Activated T-helper 1 cell treated with anti-CD3 and anti-CD28 coated beads, Interleukin-12 subunit alpha, Interleukin-12 subunit beta, Interleukin-2, Interleukin-4 antibody, amounts not matched to agents 30 ng/mL and 10 ng/mL and 1 ng/mL, durations not matched to agents 14 hours and 24 hours and 36 hours (primary cell): ENCODE measurements at regions of chr12 and their contacts with region 1.

Region 1: GRCh38 chr12:118016424-118017264 is at the start of gene RFC5:
- DNase-seq: peak; percentile 96
- H3K4me3 Mint-ChIP-seq: peak within 1 kb of the TSS; percentile 98
- H3K27ac Mint-ChIP-seq: peak within 1 kb of the TSS; percentile 94
- H3K4me1 Mint-ChIP-seq: peaks cover 29% of the 10 kb centered on the region
- H3K27me3 Mint-ChIP-seq: peaks cover 10% of the 10 kb centered on the region
- total RNA-seq, gene RFC5: 73.8 and 87.0 TPM in 2 replicates

Region 2: DNA sequence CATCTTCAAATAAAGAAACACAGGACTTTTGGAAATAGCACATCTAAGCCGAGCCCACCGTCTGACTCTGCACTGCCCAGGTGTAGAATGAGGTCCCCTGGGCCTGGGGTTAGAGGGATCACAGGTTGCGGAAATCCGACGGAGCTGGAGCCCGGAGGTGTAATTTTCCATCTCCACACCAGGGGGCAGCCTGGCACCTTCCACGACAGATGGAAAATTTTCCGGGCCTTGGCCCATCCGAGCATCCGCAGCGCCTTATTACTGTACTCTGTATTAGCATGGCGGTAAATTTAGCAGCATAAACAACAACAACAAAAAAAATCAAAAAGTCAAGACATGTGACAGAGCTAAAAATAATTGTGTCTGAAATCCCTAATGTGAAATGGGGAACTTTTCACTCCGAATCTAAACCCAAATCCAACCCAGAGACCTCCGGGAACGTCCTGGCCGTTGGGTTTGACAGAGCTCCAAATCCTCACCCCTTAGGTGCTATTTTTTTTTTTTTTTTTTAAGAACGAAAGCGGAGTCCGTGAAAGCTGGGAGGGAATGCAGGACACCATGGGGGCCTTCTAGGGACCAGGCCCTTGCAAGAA is 141.7 kb before region 1 on chr12:
- intact Hi-C with region 1: loop called (anchors 1 kb)
- DNase-seq: peak; percentile 34
- H3K4me3 Mint-ChIP-seq: no peak overlapping the region
- H3K27ac Mint-ChIP-seq: no peak overlapping the region
- H3K4me1 Mint-ChIP-seq: peaks cover 12% of the 10 kb centered on the region
- H3K27me3 Mint-ChIP-seq: peaks cover 27% of the 10 kb centered on the region

Region 3: DNA sequence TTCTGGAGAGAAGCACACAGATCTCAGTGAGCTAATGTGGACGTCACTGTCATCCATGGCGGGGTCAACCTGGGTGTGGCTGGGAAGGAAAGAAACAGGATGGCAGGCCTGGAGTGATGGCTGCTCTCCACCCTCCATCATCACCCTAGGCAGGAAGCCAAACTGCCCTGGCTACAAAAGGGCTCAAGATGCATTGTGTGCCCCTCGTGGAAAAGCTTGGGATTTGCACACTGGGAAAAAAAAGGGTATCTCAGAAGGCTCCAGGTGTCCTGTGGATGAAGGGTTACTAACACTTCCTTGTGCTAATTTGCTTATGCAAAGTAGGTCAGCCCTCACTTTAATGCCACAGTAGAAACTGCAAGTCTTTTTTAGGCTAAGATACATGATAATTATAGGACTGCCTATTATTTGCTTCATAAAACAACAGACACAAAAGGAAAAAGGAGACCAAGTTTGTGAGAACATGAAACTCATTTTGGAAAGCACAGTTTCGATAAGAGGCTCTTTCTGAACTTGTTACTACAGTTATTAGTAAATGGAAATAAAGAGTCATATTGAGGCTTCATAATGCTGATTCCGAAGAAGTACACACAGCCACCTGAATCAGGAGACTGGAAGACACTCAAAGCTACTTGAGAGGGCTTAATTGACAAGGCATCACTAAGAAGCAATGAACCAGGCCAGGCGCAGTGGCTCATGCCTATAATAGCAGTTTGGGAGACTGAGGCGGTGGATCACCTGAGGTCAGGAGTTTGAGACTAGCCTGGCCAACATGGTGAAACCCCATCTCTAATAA is 18.8 kb after region 1 on chr12:
- intact Hi-C with region 1: loop called (anchors 1 kb)
- DNase-seq: no peak
- H3K4me3 Mint-ChIP-seq: peak overlapping the region; percentile 57
- H3K27ac Mint-ChIP-seq: peak overlapping the region; percentile 99
- H3K4me1 Mint-ChIP-seq: peaks cover 46% of the 10 kb centered on the region
- H3K27me3 Mint-ChIP-seq: no peaks in the 10 kb centered on the region

Region 4: DNA sequence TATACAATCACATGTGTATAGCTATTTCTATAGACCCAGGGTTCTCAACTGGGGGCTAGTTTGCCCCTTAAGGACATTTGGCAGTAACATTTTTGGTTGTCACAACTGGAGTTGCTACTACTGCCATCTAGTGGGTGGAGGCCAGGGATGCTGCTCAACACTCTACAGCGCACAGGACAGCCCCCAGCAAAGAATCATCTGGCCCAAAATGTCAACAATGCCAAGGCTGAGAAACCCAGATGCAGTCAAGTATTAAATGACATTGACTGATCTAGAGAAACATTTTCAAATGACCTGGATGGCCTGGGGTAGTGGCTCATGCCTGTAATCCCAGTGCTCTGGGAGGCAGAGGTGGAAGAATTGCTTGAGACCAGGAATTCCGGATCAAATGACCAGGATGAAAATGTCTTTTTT is 38.5 kb after region 1 on chr12:
- intact Hi-C with region 1: loop called (anchors 1 kb)
- DNase-seq: peak; percentile 55
- H3K4me3 Mint-ChIP-seq: peak overlapping the region; percentile 60
- H3K27ac Mint-ChIP-seq: peak overlapping the region; percentile 50
- H3K4me1 Mint-ChIP-seq: peaks cover 61% of the 10 kb centered on the region
- H3K27me3 Mint-ChIP-seq: no peaks in the 10 kb centered on the region

Region 5: DNA sequence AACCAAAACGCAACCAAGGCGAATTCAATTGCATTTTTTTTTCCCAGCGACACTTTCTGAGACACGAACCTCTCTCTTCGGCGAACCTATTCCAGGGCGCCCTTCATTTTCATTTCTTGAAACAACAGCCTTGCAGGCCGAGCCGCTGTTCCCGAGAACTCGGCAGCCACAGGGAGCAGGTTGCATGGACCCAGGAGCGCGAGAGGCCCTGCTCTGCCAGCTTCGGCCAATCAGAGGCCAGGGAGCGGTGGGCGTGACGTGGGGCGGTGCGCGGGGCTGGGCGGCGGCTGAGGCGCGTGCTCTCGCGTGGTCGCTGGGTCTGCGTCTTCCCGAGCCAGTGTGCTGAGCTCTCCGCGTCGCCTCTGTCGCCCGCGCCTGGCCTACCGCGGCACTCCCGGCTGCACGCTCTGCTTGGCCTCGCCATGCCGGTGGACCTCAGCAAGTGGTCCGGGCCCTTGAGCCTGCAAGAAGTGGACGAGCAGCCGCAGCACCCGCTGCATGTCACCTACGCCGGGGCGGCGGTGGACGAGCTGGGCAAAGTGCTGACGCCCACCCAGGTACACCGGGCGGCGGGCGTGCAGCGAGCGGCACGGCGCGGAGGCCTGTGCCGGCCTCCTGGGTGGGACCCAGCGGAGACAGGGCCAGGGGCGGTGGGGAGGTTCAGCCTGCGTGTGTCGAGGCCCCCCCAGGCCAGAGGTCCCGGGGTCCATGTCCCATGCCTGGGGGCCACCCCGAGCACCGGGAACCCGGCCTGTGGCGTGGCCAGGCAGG is 119.3 kb after region 1 on chr12 and contains the start of gene PEBP1:
- intact Hi-C with region 1: loop called (anchors 1 kb)
- DNase-seq: peak; percentile 93
- H3K4me3 Mint-ChIP-seq: peak within 1 kb of the TSS; percentile 95
- H3K27ac Mint-ChIP-seq: peak within 1 kb of the TSS; percentile 89
- H3K4me1 Mint-ChIP-seq: peaks cover 18% of the 10 kb centered on the region
- H3K27me3 Mint-ChIP-seq: no peaks in the 10 kb centered on the region
- total RNA-seq, gene PEBP1: 200 and 205 TPM in 2 replicates